ENCODE measurements at regions of chr1 and their contacts with region 1.

Region 1: DNA sequence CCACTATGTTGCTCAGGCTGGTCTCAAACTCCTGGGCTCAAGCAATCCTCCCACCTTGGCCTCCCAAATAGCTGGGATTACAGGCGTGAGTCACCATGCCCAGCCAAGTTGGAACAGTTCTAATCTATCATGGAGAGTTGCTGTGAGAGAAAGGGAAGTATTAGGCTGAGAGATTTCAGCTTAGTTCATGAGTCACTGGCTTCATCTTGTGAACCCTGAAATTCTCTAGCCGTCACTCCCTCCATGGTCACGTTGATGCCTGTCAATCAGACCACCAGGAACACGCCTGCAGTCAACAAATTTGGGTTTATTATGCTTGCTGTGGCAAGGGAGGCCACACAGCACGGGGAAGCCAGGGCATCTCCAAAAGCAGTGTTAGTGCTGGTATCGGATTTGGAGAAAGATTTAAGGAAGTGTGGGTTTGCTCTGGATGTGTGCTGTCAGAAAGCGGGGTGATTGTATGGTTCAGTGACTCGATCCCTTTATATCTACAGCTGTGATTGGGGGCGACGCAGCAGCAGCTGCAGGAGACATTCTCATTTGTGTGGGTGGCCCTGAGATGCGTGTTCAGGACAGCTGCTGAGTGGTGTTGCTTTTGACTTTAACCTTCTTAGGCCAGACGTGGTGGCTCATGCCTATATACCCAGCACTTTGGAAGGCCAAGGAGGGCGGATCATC is 18.7 kb downstream of the UQCRHL start:
- DNase-seq: no peak
- H3K4me3 Mint-ChIP-seq: no peak overlapping the region
- H3K27ac Mint-ChIP-seq: no peak overlapping the region
- H3K4me1 Mint-ChIP-seq: peaks cover 3% of the 10 kb centered on the region
- H3K27me3 Mint-ChIP-seq: peaks cover 10% of the 10 kb centered on the region

Region 2: GRCh38 chr1:15543589-15544568 is 244.9 kb before region 1 on chr1:
- CTCF ChIA-PET with region 1: no interaction called
- DNase-seq: no peak
- H3K4me3 Mint-ChIP-seq: no peak overlapping the region
- H3K27ac Mint-ChIP-seq: no peak overlapping the region
- H3K4me1 Mint-ChIP-seq: no peaks in the 10 kb centered on the region
- H3K27me3 Mint-ChIP-seq: no peaks in the 10 kb centered on the region

Region 3: GRCh38 chr1:15825800-15826199 is 37.0 kb after region 1 on chr1:
- CTCF ChIA-PET with region 1: no interaction called
- DNase-seq: no peak
- H3K4me3 Mint-ChIP-seq: no peak overlapping the region
- H3K27ac Mint-ChIP-seq: no peak overlapping the region
- H3K4me1 Mint-ChIP-seq: peaks cover 25% of the 10 kb centered on the region
- H3K27me3 Mint-ChIP-seq: no peaks in the 10 kb centered on the region

Region 4: DNA sequence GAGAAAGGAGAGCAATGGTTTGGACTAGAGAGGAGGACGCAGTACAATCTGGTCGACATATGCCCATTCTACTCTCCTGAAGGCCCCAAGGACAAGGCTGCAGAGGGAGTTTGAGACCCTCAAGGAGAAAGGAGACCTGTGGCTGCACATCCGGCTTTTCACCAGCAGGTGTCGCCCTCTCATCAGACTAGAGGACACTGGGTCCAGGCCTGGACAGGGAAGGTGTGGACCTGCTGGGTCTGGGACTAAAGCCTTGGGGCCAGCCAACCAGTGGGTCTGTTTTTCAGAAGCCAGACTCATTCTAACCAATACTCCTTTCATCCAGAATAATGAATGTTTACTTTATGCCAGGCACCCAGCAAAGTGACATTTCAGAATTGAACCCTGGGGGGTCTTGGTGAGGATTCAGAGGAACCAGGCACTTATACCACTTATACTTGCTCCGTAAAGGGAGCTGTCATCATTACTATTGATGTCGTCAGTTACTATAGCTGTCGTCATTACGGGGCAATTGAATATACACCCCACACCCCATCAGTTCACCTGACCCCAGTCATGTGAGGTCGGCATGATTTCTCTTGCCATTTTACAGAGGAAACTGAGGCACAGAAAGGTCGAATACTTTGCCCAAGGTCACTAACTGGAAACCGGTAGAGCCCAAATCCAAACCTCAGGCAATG is 220.4 kb after region 1 on chr1:
- CTCF ChIA-PET with region 1: interaction called, 39 read pairs
- DNase-seq: peak; percentile 82
- H3K4me3 Mint-ChIP-seq: no peak overlapping the region
- H3K27ac Mint-ChIP-seq: no peak overlapping the region
- H3K4me1 Mint-ChIP-seq: peaks cover 4% of the 10 kb centered on the region
- H3K27me3 Mint-ChIP-seq: peaks cover 50% of the 10 kb centered on the region